MCF 10A (cell line): ENCODE measurements at regions of chr1 and their contacts with region 1.

Region 1: DNA sequence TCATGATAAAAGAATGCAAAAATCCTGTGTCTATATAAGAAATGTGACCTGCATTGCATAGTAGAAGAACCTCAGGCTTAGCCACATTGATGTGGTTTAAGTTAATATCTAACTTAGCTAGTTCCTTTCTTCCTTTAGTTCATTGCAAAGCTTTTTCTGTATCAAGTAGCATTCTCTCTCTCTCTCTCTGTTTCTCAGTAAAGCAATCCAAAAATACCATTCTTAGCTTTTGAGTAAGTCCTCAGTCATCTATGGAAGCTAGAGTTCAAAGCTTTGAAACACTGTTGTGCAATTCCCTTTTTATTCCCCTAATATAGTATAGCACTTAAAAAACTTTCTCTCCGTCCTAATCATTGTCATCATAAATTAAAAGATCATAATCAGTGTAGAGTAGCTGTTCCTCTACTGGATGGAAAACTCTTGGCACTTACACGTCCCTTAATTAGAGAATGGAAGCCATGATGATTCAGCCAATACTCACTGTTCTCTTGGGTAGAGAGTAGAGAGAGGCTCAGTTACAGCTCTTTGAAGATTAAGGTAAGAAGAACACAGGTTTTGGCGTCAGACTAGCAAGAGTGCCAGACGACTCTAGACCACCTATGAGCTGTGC is 350.3 kb upstream of the LYPLAL1 start:
- DNase-seq: peak; percentile 35
- H3K4me3 Mint-ChIP-seq: no peak overlapping the region
- H3K27ac Mint-ChIP-seq: peak overlapping the region; percentile 6
- H3K4me1 Mint-ChIP-seq: peaks cover 12% of the 10 kb centered on the region
- H3K27me3 Mint-ChIP-seq: no peaks in the 10 kb centered on the region
- CTCF ChIP-seq: no peak

Region 2: GRCh38 chr1:218323568-218324225 is 499.7 kb before region 1 on chr1:
- CTCF ChIA-PET with region 1: no interaction called
- POLR2A ChIA-PET with region 1: no interaction called
- intact Hi-C with region 1: no loop called
- DNase-seq: no peak
- H3K4me3 Mint-ChIP-seq: no peak overlapping the region
- H3K27ac Mint-ChIP-seq: no peak overlapping the region
- H3K4me1 Mint-ChIP-seq: no peaks in the 10 kb centered on the region
- H3K27me3 Mint-ChIP-seq: no peaks in the 10 kb centered on the region
- CTCF ChIP-seq: no peak

Region 3: DNA sequence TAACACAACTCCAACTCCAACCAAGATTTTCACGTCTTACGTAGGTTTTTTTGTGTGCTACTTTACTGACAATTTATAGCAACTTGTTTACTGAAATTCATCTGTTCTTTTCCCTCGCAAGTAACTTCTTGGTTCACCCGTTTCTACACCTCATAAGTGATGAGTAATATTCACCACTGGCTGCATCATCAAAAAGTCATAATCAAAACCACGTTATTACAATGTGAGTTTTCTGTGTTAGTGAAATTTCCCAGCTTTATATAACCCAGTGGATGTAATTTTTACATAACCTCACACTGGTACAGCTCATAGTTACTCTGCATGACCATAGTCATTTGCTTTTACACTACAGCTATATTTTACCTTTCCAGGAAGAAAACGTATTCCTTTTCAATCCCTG is 50.8 kb before region 1 on chr1:
- CTCF ChIA-PET with region 1: no interaction called
- POLR2A ChIA-PET with region 1: no interaction called
- intact Hi-C with region 1: no loop called
- DNase-seq: peak; percentile 46
- H3K4me3 Mint-ChIP-seq: no peak overlapping the region
- H3K27ac Mint-ChIP-seq: no peak overlapping the region
- H3K4me1 Mint-ChIP-seq: peaks cover 6% of the 10 kb centered on the region
- H3K27me3 Mint-ChIP-seq: no peaks in the 10 kb centered on the region
- CTCF ChIP-seq: no peak

Region 4: DNA sequence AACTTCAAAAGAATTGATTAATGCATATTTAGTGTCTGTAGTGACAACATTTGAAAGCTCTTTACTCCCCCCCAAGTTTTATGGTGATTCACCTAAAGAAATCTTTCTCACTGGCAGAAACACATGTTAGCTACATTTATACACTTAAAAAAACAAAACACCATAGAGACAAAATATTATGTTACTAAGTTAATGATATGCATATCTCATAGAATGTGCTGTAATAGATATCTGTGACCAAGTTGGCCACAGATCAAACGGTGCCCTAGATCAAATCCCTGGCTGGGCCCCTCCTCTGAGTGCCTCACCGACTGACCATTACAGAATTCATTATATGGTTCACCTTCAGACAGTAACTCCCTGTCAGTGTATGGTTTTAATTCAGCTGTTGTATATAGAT is 28.2 kb after region 1 on chr1:
- CTCF ChIA-PET with region 1: no interaction called
- POLR2A ChIA-PET with region 1: no interaction called
- intact Hi-C with region 1: loop called (anchors 2 kb)
- DNase-seq: no peak
- H3K4me3 Mint-ChIP-seq: no peak overlapping the region
- H3K27ac Mint-ChIP-seq: no peak overlapping the region
- H3K4me1 Mint-ChIP-seq: no peaks in the 10 kb centered on the region
- H3K27me3 Mint-ChIP-seq: no peaks in the 10 kb centered on the region
- CTCF ChIP-seq: no peak